ENCODE measurements at regions of chr7 and their contacts with region 1.

Region 1: DNA sequence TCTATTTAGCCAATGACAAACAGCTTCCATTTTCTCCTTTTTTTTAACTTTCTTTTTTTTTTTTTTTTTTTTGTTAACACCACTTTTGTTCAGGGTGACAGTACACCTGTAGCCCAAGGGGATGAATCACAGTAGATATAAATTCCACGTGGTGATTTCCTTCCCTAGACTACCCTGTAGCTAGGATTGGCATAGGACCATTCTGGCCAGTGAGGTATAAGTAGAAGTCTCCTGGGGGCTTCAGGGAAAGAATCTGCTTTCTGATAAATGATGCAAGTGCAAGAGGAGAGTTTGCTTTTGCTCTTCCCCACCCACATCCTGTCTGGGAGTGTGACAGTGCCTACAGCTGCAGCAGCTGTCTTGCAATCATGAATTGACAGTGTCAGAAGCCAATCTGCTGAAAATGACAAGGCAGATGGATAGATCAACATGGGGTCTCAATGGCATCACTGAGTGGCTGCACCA is 63.2 kb upstream of the TOMM7 start:
- DNase-seq: peak in 7 of 9 donors; percentile 5 to 58 (median 47)
- ATAC-seq: peak; percentile 69
- H3K4me3 ChIP-seq: no peak overlapping the region
- H3K4me3 Mint-ChIP-seq: peak overlapping the region in 8 of 10 donors; percentile 19 to 84 (median 36)
- H3K27ac ChIP-seq: peak overlapping the region; percentile 8
- H3K27ac Mint-ChIP-seq: peak overlapping the region in 7 of 9 donors; percentile 19 to 95 (median 67)
- H3K4me1 ChIP-seq: peaks cover 8 to 9% of the 10 kb centered on the region in 2 donors
- H3K4me1 Mint-ChIP-seq: peaks cover 5 to 39% (median 14%) of the 10 kb centered on the region in 7 donors
- H3K27me3 ChIP-seq: no peaks in the 10 kb centered on the region
- H3K27me3 Mint-ChIP-seq: no peaks in the 10 kb centered on the region

Region 2: DNA sequence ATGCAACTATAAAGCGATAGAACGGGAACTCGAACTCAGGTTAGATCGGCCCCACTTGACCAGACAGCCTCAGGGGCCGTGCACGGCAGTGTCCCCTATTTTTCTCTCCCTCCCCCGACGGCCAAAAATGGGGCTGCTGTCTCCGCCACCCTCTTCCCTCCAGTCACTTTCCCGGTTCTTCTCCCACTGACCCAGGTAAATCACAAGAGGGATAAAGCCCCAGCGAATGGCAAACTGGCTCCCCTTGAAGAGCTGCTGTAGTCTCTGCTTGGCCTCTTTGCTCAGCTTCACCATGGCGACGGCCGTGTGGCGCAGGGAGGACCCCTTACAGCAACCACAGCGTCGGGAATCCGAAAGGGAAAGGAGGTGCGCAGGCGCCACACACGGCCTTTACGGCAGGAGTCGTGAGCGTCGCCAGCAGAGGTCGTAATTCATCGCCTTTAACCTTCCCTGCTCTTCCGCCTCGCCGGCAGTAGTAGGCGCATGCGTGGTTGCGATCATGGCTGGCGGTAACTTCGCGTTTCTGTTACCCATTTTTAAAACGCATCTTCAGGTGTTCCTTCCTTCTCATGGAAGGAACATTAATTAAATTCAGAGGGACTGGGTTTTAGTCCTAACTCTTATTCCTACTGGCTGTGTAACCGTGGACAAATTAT is 63.2 kb before region 1 on chr7 and contains the start of gene TOMM7:
- CTCF ChIA-PET with region 1: interaction called, 3 read pairs
- POLR2A ChIA-PET with region 1: no interaction called
- intact Hi-C with region 1: loop called in 1 of 2 experiments (anchors 2 kb)
- DNase-seq: peak; percentile 68 to 92 (median 90)
- ATAC-seq: peak; percentile 99
- H3K4me3 ChIP-seq: peak within 1 kb of the TSS; percentile 83
- H3K4me3 Mint-ChIP-seq: peak within 1 kb of the TSS; percentile 93 to 100 (median 99)
- H3K27ac ChIP-seq: peak within 1 kb of the TSS; percentile 94
- H3K27ac Mint-ChIP-seq: peak within 1 kb of the TSS; percentile 94 to 100 (median 99)
- H3K4me1 ChIP-seq: peaks cover 6 to 19% of the 10 kb centered on the region in 2 donors
- H3K4me1 Mint-ChIP-seq: peaks cover 15 to 53% (median 43%) of the 10 kb centered on the region in 7 donors
- H3K27me3 ChIP-seq: peaks cover 0 to 4% of the 10 kb centered on the region in 2 donors
- H3K27me3 Mint-ChIP-seq: peaks cover 15 to 36% (median 19%) of the 10 kb centered on the region in 5 donors
- total RNA-seq, gene TOMM7: 302 to 737 (median 649) TPM

Region 3: GRCh38 chr7:22944022-22944421 is 58.2 kb after region 1 on chr7:
- CTCF ChIA-PET with region 1: no interaction called
- POLR2A ChIA-PET with region 1: no interaction called
- intact Hi-C with region 1: loop called in 1 of 2 experiments (anchors 5 kb)
- DNase-seq: no peak
- ATAC-seq: no peak
- H3K4me3 ChIP-seq: no peak overlapping the region
- H3K4me3 Mint-ChIP-seq: no peak overlapping the region
- H3K27ac ChIP-seq: no peak overlapping the region
- H3K27ac Mint-ChIP-seq: no peak overlapping the region
- H3K4me1 ChIP-seq: no peaks in the 10 kb centered on the region
- H3K4me1 Mint-ChIP-seq: no peaks in the 10 kb centered on the region
- H3K27me3 ChIP-seq: no peaks in the 10 kb centered on the region
- H3K27me3 Mint-ChIP-seq: no peaks in the 10 kb centered on the region

Measured in naive thymus-derived CD4-positive, alpha-beta T cell (primary cell).